ENCODE measurements at regions of chr6 and their contacts with region 1.

Region 1: DNA sequence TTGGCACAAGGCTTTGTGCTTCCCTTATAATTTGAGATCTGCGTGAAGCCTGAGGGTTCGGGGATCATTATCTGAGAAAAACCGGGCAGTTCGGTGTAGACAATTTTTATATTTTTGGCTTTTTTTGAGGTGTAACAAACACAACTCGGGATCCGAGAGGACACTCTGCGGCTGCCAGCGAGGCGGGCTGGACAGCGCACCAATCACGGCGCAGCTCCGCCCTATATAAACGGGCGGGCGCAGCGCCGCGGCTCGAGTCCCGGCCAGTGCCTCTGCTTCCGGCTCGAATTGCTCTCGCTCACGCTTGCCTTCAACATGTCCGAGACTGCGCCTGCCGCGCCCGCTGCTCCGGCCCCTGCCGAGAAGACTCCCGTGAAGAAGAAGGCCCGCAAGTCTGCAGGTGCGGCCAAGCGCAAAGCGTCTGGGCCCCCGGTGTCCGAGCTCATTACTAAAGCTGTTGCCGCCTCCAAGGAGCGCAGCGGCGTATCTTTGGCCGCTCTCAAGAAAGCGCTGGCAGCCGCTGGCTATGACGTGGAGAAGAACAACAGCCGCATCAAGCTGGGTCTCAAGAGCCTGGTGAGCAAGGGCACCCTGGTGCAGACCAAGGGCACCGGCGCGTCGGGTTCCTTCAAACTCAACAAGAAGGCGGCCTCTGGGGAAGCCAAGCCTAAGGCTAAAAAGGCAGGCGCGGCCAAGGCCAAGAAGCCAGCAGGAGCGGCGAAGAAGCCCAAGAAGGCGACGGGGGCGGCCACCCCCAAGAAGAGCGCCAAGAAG is 69.0 kb downstream of the HFE start:
- DNase-seq: peak; percentile 91
- ATAC-seq: peak; percentile 39
- H3K4me3 Mint-ChIP-seq: peak overlapping the region; percentile 86
- H3K27ac Mint-ChIP-seq: peak overlapping the region; percentile 97
- H3K4me1 Mint-ChIP-seq: peaks cover 32% of the 10 kb centered on the region
- H3K27me3 Mint-ChIP-seq: no peaks in the 10 kb centered on the region

Region 2: DNA sequence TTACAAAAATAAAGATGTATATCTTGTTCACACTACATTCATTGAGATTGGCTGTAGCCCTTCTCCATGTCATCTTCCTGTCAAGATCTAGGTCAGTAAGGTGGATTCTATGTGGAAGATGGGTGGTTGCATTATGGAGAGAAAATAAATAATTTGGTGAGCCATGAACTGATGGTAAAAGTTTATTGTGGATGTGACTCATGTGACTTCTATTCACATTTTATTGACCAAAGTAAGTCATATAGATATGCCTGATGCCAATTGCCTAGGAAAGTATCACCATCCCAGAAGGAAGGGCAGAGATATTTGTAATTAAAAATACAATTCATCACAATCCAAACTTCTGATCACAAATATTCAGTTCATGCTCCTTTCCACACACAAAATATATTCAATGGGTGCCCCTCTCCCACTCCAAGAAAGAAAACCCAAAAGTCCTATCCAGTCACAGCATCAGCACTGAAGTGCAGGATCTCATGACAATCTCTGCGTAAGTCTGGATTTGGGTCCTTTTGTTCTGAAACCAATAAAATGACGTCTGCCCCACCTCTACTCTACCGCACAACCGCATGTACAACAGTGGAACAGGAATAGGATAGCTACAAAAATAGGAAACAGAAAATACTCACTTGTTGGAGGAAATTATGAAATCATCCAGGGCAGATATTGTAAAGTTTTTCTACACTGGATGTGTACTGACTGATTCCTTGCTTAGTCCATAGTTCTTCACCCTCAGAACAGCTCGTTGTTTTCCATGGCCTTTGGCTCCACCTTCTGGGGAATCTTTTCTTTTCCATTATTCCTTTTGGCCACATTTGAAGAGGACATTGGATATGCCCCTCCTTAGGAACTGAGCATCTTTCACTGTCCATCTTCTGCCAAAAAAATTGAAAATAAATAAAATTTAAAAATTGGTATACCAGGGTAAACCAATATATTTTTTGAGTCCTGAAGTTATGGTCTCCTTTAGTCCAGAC is 266.1 kb before region 1 on chr6:
- CTCF ChIA-PET with region 1: no interaction called
- POLR2A ChIA-PET with region 1: no interaction called
- intact Hi-C with region 1: no loop called
- DNase-seq: peak; percentile 29
- ATAC-seq: peak; percentile 16
- H3K4me3 Mint-ChIP-seq: no peak overlapping the region
- H3K27ac Mint-ChIP-seq: no peak overlapping the region
- H3K4me1 Mint-ChIP-seq: no peaks in the 10 kb centered on the region
- H3K27me3 Mint-ChIP-seq: peaks cover 4% of the 10 kb centered on the region

Region 3: GRCh38 chr6:26045065-26045927 is 111.0 kb before region 1 on chr6:
- CTCF ChIA-PET with region 1: interaction called, 3 read pairs
- POLR2A ChIA-PET with region 1: interaction called, 22 read pairs
- intact Hi-C with region 1: loop called in 1 of 2 experiments (anchors 1 kb)
- DNase-seq: peak; percentile 83
- ATAC-seq: peak; percentile 63
- H3K4me3 Mint-ChIP-seq: peak overlapping the region; percentile 79
- H3K27ac Mint-ChIP-seq: peak overlapping the region; percentile 99
- H3K4me1 Mint-ChIP-seq: peaks cover 18% of the 10 kb centered on the region
- H3K27me3 Mint-ChIP-seq: no peaks in the 10 kb centered on the region

Region 4: DNA sequence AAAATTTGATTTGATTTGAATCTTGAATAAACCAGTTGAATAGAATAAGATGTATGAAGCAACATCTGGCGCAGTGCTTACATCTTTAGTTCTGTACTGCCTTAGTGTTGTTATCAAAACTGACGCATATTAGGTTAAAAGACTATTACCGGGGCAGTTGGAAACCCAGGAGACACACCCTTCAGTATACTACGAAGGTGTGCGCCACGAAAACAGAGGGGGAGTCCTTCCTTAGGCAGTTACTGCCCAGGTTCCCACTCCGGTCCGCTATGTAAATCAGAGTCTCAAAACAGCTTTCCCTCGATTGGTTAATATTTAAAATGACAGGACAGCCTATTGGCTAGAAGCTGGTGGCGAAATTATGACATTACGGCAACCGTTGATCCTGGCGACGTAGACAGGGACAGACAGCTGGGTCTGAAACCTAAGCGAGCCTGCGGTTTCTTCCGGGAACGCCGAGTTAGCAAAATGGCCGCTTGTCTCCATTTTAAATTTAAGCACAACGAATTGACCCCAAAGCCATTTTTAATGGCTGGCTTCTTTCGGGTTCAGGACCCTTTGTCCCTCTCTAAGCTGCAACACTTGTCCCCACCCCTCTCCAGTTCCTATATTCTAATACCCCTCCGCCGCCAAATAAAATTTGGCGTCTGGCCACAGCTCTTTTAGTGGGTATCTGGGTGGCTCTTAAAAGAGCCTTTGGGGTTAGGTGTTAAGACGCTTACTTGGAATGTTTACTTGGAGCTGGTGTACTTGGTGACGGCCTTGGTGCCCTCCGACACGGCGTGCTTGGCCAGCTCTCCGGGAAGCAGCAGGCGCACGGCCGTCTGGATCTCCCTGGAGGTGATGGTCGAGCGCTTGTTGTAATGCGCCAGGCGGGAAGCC is 33.2 kb before region 1 on chr6:
- CTCF ChIA-PET with region 1: interaction called, 22 read pairs
- POLR2A ChIA-PET with region 1: interaction called, 542 read pairs
- intact Hi-C with region 1: loop called (anchors 1 kb)
- DNase-seq: peak; percentile 95
- ATAC-seq: peak; percentile 57
- H3K4me3 Mint-ChIP-seq: peak overlapping the region; percentile 82
- H3K27ac Mint-ChIP-seq: peak overlapping the region; percentile 100
- H3K4me1 Mint-ChIP-seq: peaks cover 34% of the 10 kb centered on the region
- H3K27me3 Mint-ChIP-seq: peaks cover 3% of the 10 kb centered on the region

Region 5: GRCh38 chr6:26196846-26197648 is 40.8 kb after region 1 on chr6:
- CTCF ChIA-PET with region 1: interaction called, 16 read pairs
- POLR2A ChIA-PET with region 1: interaction called, 248 read pairs
- intact Hi-C with region 1: loop called (anchors 1 kb)
- DNase-seq: peak; percentile 86
- ATAC-seq: peak; percentile 43
- H3K4me3 Mint-ChIP-seq: peak overlapping the region; percentile 98
- H3K27ac Mint-ChIP-seq: peak overlapping the region; percentile 99
- H3K4me1 Mint-ChIP-seq: peaks cover 28% of the 10 kb centered on the region
- H3K27me3 Mint-ChIP-seq: no peaks in the 10 kb centered on the region

Region 6: GRCh38 chr6:26249957-26250697 is 93.9 kb after region 1 on chr6:
- CTCF ChIA-PET with region 1: interaction called, 4 read pairs
- POLR2A ChIA-PET with region 1: interaction called, 40 read pairs
- intact Hi-C with region 1: no loop called
- DNase-seq: peak; percentile 85
- ATAC-seq: peak; percentile 63
- H3K4me3 Mint-ChIP-seq: peak overlapping the region; percentile 86
- H3K27ac Mint-ChIP-seq: peak overlapping the region; percentile 97
- H3K4me1 Mint-ChIP-seq: peaks cover 14% of the 10 kb centered on the region
- H3K27me3 Mint-ChIP-seq: no peaks in the 10 kb centered on the region

Region 7: GRCh38 chr6:26375270-26375669 is 219.0 kb after region 1 on chr6:
- CTCF ChIA-PET with region 1: no interaction called
- POLR2A ChIA-PET with region 1: no interaction called
- intact Hi-C with region 1: no loop called
- DNase-seq: no peak
- ATAC-seq: no peak
- H3K4me3 Mint-ChIP-seq: no peak overlapping the region
- H3K27ac Mint-ChIP-seq: peak overlapping the region; percentile 44
- H3K4me1 Mint-ChIP-seq: peaks cover 17% of the 10 kb centered on the region
- H3K27me3 Mint-ChIP-seq: no peaks in the 10 kb centered on the region

Region 8: DNA sequence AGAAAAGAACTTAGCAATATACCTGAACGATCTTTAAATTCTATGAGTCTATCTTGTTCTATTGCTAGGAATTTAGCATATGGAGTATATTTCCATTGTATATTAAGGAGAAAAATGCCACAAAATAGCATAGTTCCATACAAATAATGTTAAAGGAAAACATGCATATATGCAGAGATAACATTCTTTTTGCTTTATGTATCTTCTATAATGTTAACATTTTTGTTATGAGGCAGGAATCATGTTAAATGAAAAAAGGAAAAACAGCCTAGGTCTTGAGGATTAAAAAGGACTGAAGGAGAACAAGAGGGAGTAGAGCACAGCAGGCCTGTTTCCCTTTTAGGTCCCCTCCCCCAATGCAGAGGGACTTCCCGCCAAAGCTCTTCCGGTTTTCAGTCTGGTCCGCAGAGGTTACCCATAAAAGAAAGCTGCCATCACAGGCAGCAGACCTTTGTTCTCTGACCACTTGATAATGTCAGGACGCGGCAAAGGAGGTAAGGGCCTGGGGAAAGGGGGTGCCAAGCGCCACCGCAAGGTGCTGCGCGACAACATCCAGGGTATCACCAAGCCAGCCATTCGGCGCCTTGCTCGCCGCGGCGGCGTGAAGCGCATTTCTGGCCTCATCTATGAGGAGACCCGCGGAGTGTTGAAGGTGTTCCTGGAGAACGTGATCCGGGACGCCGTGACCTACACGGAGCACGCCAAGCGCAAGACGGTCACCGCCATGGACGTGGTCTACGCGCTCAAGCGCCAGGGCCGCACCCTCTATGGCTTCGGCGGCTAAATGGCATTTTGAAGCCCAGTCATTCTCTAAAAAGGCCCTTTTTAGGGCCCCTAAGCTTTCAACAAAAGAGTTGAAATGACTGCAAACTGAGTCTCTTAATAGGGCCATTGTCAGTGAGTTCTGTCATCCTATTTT is 982.8 kb after region 1 on chr6:
- CTCF ChIA-PET with region 1: no interaction called
- POLR2A ChIA-PET with region 1: interaction called, 3 read pairs
- intact Hi-C with region 1: loop called in 1 of 2 experiments (anchors 2 kb)
- DNase-seq: peak; percentile 84
- ATAC-seq: peak; percentile 76
- H3K4me3 Mint-ChIP-seq: peak overlapping the region; percentile 86
- H3K27ac Mint-ChIP-seq: peak overlapping the region; percentile 96
- H3K4me1 Mint-ChIP-seq: peaks cover 43% of the 10 kb centered on the region
- H3K27me3 Mint-ChIP-seq: no peaks in the 10 kb centered on the region

Region 9: DNA sequence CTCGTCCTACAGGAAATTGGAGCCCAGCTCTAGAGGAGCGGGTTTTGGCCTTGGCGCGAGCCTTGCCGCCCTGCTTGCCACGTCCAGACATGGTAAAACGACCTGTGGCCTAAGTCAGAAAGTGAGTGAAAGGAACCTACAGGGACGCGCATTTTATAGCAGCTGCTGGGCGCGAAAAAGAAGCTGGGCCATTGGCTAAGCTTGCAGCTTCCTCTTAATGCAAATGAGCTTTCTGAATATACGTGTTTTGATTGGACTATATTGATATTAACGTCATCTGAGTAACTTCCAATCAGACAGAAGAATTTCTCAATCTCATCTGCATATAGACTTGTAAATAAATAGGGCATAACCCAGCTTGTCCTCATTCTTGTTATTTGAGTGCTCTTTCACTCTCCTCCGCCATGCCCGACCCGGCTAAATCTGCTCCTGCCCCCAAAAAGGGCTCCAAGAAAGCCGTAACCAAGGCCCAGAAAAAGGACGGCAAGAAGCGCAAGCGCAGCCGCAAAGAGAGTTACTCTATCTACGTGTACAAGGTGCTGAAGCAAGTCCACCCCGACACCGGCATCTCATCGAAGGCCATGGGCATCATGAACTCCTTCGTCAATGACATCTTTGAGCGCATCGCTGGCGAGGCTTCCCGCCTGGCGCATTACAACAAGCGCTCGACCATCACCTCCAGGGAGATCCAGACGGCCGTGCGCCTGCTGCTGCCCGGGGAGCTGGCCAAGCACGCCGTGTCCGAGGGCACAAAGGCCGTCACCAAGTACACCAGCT is 1737.0 kb after region 1 on chr6:
- CTCF ChIA-PET with region 1: no interaction called
- POLR2A ChIA-PET with region 1: no interaction called
- intact Hi-C with region 1: loop called (anchors 2 kb)
- DNase-seq: peak; percentile 94
- ATAC-seq: peak; percentile 64
- H3K4me3 Mint-ChIP-seq: no peak overlapping the region
- H3K27ac Mint-ChIP-seq: no peak overlapping the region
- H3K4me1 Mint-ChIP-seq: peaks cover 31% of the 10 kb centered on the region
- H3K27me3 Mint-ChIP-seq: no peaks in the 10 kb centered on the region